Activated CD8-positive, alpha-beta T cell treated with anti-CD3 and anti-CD28 coated beads for 36 hours (primary cell): ENCODE measurements at regions of chr5 and their contacts with region 1.

Region 1: DNA sequence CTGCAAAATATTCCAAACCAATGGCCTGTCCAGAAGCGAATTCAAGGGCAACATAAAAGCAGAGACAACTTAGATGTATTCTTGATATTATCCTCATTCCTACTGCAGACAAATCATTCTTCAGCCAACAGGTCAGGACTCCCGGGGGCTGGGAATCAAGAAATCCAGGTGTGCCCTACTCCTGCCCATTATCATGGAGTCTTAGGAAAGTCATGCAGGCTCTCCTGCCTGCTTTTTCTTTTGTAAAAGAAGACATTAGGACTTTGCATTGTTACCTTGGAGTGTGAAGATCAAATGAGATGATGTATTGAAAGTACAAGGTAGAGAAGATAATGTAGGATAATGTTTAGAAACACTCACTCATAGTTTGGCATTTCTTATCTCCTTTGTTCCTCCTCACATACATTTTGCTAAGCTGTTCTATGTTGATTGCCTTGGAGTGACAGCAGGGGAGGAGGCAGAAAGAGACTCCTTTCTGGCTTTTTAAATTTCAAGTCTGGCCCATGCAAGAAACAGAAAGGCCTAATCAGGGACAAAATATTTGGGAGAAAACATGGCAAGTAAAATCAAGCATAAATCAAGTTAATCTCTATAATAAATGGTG is 113.8 kb downstream of the SV2C start:
- DNase-seq: no peak
- ATAC-seq: no peak
- H3K4me3 Mint-ChIP-seq: no peak overlapping the region
- H3K27ac Mint-ChIP-seq: no peak overlapping the region
- H3K4me1 Mint-ChIP-seq: no peaks in the 10 kb centered on the region
- H3K27me3 Mint-ChIP-seq: peaks cover 3% of the 10 kb centered on the region
- CTCF ChIP-seq: no peak

Region 2: GRCh38 chr5:76081811-76082771 is 114.9 kb before region 1 on chr5:
- CTCF ChIA-PET with region 1: no interaction called
- POLR2A ChIA-PET with region 1: no interaction called
- intact Hi-C with region 1: no loop called
- DNase-seq: peak; percentile 8
- ATAC-seq: peak; percentile 24
- H3K4me3 Mint-ChIP-seq: peak overlapping the region; percentile 67
- H3K27ac Mint-ChIP-seq: no peak overlapping the region
- H3K4me1 Mint-ChIP-seq: peaks cover 25% of the 10 kb centered on the region
- H3K27me3 Mint-ChIP-seq: peaks cover 79% of the 10 kb centered on the region
- CTCF ChIP-seq: no peak

Region 3: DNA sequence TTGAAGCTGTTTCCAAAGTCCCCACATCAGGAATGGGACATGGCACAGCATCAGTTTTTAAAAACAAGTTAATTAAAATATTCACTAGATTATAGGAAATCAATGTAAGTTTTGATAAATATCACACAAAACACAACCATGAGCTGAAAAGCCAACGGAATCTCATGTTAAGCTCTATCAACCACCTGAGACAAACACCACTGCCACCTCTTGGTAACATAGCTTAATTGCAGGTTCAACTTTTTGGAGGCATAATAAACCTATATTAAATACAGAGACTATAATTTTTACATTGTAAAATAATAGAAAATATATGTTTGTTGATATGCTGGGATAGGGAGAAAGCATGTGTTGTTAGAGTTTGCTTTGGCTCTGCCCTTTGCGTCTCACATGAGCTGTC is 12.3 kb after region 1 on chr5:
- CTCF ChIA-PET with region 1: interaction called, 18 read pairs
- POLR2A ChIA-PET with region 1: no interaction called
- intact Hi-C with region 1: no loop called
- DNase-seq: no peak
- ATAC-seq: no peak
- H3K4me3 Mint-ChIP-seq: no peak overlapping the region
- H3K27ac Mint-ChIP-seq: no peak overlapping the region
- H3K4me1 Mint-ChIP-seq: no peaks in the 10 kb centered on the region
- H3K27me3 Mint-ChIP-seq: no peaks in the 10 kb centered on the region
- CTCF ChIP-seq: peak; percentile 48